PC-3 (cell line): ENCODE measurements at regions of chr18 and their contacts with region 1.

Region 1: DNA sequence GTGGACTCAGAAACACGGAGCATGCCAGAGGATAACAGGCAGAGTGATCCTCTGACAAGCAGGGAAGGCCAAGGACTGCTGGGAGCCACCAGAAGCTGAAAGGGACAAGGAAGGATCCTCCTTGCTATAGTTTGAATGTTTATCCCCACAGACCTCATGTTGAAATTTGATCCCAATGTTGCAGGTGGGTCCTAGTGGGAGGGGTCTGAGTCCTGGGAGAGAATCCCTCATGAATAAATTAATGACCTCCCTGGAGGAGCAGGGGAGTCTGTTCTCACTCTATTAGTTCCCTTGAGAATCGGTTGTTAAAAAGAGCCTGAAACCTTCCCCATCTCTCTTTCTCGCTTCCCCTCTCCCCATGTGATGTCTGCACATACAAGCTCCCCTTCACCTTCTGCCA is 124.4 kb downstream of the FBXO15 start:
- DNase-seq: no peak
- ATAC-seq: no peak
- H3K4me3 ChIP-seq: no peak overlapping the region
- H3K27ac ChIP-seq: no peak overlapping the region
- H3K4me1 ChIP-seq: no peaks in the 10 kb centered on the region
- H3K27me3 ChIP-seq: peaks cover 52% of the 10 kb centered on the region
- CTCF ChIP-seq: no peak

Region 2: GRCh38 chr18:72727038-72727655 is 1296.1 kb before region 1 on chr18:
- CTCF ChIA-PET with region 1: no interaction called
- POLR2A ChIA-PET with region 1: interaction called, 10 read pairs
- intact Hi-C with region 1: no loop called
- DNase-seq: peak; percentile 22
- ATAC-seq: peak; percentile 38
- H3K4me3 ChIP-seq: no peak overlapping the region
- H3K27ac ChIP-seq: no peak overlapping the region
- H3K4me1 ChIP-seq: peaks cover 7% of the 10 kb centered on the region; the same call in 1 of the 2 replicates
- H3K27me3 ChIP-seq: no peaks in the 10 kb centered on the region
- CTCF ChIP-seq: no peak